ENCODE measurements at regions of chr10 and their contacts with region 1.

Region 1: DNA sequence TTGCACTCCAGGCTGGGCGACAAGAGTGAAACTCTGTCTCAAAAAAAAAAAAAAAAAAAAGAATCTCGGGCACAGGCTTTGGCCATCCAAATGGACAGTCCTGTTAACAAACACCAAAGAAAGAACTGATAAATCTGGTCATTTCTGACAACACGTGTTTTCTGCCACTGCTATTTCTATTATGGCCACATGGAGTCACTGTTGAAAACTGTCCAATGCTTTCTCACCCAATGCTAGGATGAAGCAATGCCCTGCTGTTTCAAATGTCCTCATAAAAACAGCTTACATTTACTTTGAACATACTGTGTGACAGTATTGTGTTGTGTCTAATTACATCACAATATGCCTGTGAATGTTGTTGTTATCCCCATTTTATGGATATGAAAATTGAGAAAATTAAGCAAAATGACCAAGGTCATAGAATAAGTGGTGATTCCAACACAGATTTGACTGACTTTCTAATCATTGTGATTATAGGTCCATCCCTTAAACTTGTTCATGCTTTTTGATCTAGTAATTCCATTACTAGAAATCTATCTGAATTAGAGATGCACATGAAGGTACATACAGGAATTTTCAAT is 19.9 kb upstream of the MAP3K8 start:
- DNase-seq: no peak
- ATAC-seq: peak; percentile 39
- H3K4me3 Mint-ChIP-seq: no peak overlapping the region
- H3K27ac Mint-ChIP-seq: no peak overlapping the region
- H3K4me1 Mint-ChIP-seq: peaks cover 18% of the 10 kb centered on the region
- H3K27me3 Mint-ChIP-seq: no peaks in the 10 kb centered on the region

Region 2: GRCh38 chr10:30447125-30447799 is 33.2 kb after region 1 on chr10:
- CTCF ChIA-PET with region 1: interaction called, 3 read pairs
- POLR2A ChIA-PET with region 1: no interaction called
- intact Hi-C with region 1: loop called in 1 of 2 experiments (anchors 1 kb)
- DNase-seq: no peak
- ATAC-seq: peak; percentile 89
- H3K4me3 Mint-ChIP-seq: no peak overlapping the region
- H3K27ac Mint-ChIP-seq: no peak overlapping the region
- H3K4me1 Mint-ChIP-seq: peaks cover 14% of the 10 kb centered on the region
- H3K27me3 Mint-ChIP-seq: no peaks in the 10 kb centered on the region

Region 3: DNA sequence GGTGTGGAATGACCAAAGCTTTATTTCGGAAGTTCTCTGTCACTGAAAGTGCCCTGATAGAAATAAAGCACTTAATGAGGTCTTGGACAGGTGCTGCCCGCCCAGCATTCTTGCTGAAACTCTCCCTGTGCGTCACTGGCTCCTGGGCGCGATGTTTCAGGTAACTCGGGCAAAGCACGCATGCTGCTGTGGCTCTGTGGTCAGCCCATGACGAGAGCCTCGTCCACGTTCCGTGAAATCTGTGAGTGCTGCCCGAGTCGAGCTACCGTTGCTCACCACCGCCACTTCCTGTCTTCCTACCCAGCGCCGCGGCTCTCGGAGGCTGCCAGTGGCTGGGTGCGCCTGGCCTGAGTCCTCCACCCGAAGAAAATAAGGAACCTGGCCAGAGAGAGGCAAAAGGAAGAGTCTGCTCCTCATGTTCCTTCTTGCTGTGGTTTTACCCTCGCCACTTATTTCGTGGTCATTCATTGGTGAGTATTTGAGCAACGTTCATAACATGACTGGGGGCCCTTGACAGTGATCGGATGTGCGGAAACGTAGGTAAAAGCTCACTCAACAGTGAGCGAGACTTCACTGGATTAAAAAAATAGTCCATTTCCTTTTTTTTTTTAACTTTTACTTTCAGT is 115.4 kb after region 1 on chr10:
- CTCF ChIA-PET with region 1: interaction called, 15 read pairs
- POLR2A ChIA-PET with region 1: no interaction called
- intact Hi-C with region 1: loop called (anchors 1 kb)
- DNase-seq: peak; percentile 86
- ATAC-seq: peak; percentile 83
- H3K4me3 Mint-ChIP-seq: peak overlapping the region; percentile 75
- H3K27ac Mint-ChIP-seq: peak overlapping the region; percentile 95
- H3K4me1 Mint-ChIP-seq: peaks cover 56% of the 10 kb centered on the region
- H3K27me3 Mint-ChIP-seq: no peaks in the 10 kb centered on the region

Region 4: DNA sequence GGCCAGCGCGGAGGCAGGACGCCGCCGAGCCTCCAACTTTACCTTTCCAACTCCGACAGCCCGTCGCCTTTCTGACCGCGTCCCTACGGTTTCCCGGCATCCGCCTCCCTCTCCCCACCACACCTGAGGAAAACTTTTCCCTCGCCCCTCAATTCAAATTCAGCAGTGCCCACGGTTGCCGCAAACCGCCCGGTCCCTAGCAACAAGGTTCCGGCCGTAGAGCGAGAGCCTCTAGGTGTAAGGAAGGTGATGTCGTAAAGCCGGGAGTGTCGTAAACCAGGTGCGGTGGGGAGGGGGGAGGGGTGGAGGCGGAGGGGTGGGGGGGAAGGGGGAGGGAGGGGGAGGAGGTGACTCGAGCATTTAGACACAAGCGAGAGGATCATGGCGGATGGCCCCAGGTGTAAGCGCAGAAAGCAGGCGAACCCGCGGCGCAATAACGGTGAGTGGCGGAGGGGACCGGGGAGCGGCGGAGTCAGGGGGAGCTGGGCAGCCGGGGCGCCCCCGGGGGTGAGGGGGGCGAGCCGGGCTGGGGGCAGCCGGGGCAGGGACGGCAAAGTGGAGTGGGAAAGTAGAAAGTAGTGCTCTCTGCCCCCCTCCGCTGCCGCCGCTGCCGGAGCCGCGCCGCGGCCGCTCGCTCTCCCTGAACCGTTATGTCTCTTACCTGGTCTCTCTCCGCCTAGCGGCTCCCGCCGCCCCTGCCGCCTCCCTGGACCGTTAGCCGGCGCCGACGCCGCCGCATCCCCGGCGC is 904.9 kb after region 1 on chr10 and contains the start of gene ZEB1:
- CTCF ChIA-PET with region 1: no interaction called
- POLR2A ChIA-PET with region 1: no interaction called
- intact Hi-C with region 1: no loop called
- DNase-seq: peak; percentile 95
- ATAC-seq: peak; percentile 55
- H3K4me3 Mint-ChIP-seq: peak within 1 kb of the TSS; percentile 93
- H3K27ac Mint-ChIP-seq: peak within 1 kb of the TSS; percentile 99
- H3K4me1 Mint-ChIP-seq: peaks cover 39% of the 10 kb centered on the region
- H3K27me3 Mint-ChIP-seq: no peaks in the 10 kb centered on the region
- total RNA-seq, gene ZEB1: 32.0 to 49.0 TPM